GM12878 (cell line): ENCODE measurements at regions of chr5 and their contacts with region 1.

Region 1: GRCh38 chr5:80481019-80481893 is 6.6 kb upstream of the FAM151B start:
- DNase-seq: peak; percentile 27
- ATAC-seq: peak; percentile 100
- H3K4me3 ChIP-seq: no peak overlapping the region
- H3K27ac ChIP-seq: no peak overlapping the region
- H3K4me1 ChIP-seq: no peaks in the 10 kb centered on the region
- H3K27me3 ChIP-seq: no peaks in the 10 kb centered on the region
- CTCF ChIP-seq: peak; percentile 69 to 86 (median 85)
- EP300 ChIP-seq: no peak
- POLR2A ChIP-seq: no peak
- RAD21 ChIP-seq: peak; percentile 61

Region 2: DNA sequence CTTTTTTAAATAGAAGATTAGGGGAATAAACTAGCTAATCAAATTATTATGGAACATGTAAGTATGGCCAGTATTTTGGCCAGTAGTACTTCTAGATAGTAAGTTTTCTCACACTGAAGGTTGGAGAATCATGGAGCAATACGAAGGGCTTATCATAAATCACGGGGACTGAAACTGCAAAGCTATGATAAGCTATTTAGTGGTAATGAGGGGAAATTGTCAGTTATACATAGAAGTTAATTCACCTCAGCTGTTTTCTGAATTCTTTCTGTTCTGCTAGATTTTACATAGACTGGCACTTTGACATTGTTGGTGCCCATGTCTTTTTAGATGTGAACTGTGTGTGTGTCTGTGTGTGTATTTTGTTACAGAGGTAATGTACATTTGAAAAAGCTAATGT is 27.9 kb before region 1 on chr5:
- CTCF ChIA-PET with region 1: interaction called, 12 read pairs
- POLR2A ChIA-PET with region 1: no interaction called
- RAD21 ChIA-PET with region 1: no interaction called
- SMC1A ChIA-PET with region 1: interaction called, 5 read pairs
- in situ Hi-C with region 1: no loop called
- intact Hi-C with region 1: no loop called
- DNase-seq: no peak
- ATAC-seq: no peak
- H3K4me3 ChIP-seq: no peak overlapping the region
- H3K27ac ChIP-seq: no peak overlapping the region
- H3K4me1 ChIP-seq: no peaks in the 10 kb centered on the region
- H3K27me3 ChIP-seq: no peaks in the 10 kb centered on the region
- CTCF ChIP-seq: no peak
- EP300 ChIP-seq: no peak
- POLR2A ChIP-seq: no peak
- RAD21 ChIP-seq: no peak

Region 3: GRCh38 chr5:80516826-80517225 is 35.6 kb after region 1 on chr5:
- CTCF ChIA-PET with region 1: interaction called, 15 read pairs
- POLR2A ChIA-PET with region 1: no interaction called
- RAD21 ChIA-PET with region 1: no interaction called
- SMC1A ChIA-PET with region 1: interaction called, 3 read pairs
- in situ Hi-C with region 1: no loop called
- intact Hi-C with region 1: no loop called
- DNase-seq: peak; percentile 2
- ATAC-seq: peak; percentile 91
- H3K4me3 ChIP-seq: no peak overlapping the region
- H3K27ac ChIP-seq: no peak overlapping the region
- H3K4me1 ChIP-seq: no peaks in the 10 kb centered on the region
- H3K27me3 ChIP-seq: no peaks in the 10 kb centered on the region
- CTCF ChIP-seq: no peak
- EP300 ChIP-seq: no peak
- POLR2A ChIP-seq: no peak
- RAD21 ChIP-seq: no peak